ENCODE measurements at regions of chr2 and their contacts with region 1.

Region 1: DNA sequence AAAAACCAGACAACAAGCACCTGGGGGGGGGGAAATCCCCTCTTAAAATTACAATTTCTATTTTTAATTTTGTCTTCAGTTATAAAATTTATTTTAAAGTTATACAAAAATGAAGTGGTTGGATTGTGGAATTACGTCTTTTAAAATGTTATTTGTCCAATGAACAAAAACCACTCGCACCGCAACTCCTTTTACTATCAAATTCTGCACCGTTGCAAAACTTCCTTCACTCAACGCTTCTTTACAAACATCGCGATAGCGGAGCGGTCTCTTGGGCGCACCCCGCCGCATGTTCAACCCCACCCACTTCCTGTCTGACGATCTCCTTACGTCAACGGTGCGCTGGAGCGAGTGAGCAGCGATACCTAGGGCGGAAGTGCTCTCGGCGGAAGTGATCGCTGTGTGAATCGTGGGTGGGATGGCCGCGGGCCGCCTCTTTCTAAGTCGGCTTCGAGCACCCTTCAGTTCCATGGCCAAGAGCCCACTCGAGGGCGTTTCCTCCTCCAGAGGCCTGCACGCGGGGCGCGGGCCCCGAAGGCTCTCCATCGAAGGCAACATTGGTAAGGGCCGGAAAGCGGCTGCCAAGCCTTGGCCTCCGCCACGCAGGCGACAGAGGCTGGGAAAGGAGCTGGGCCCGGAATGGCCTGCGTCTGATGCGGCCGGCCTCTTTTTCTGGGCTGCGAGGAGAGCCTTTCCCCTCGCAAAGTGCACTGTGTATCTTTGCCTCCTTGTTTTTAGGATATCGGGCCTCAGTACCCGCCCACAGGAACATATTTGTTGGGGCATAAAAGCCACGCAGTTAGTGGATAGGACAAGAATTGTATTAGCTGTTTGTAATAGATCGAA is at the start of gene DGUOK:
- DNase-seq: peak; percentile 99
- ATAC-seq: peak; percentile 99
- H3K4me3 Mint-ChIP-seq: peak within 1 kb of the TSS; percentile 87
- H3K27ac Mint-ChIP-seq: peak within 1 kb of the TSS; percentile 96
- H3K4me1 Mint-ChIP-seq: peaks cover 49% of the 10 kb centered on the region
- H3K27me3 Mint-ChIP-seq: no peaks in the 10 kb centered on the region
- total RNA-seq, gene DGUOK: 97.6 to 119 TPM

Region 2: GRCh38 chr2:73536133-73536840 is 390.4 kb before region 1 on chr2:
- CTCF ChIA-PET with region 1: no interaction called
- POLR2A ChIA-PET with region 1: no interaction called
- intact Hi-C with region 1: no loop called
- DNase-seq: no peak
- ATAC-seq: no peak
- H3K4me3 Mint-ChIP-seq: no peak overlapping the region
- H3K27ac Mint-ChIP-seq: no peak overlapping the region
- H3K4me1 Mint-ChIP-seq: no peaks in the 10 kb centered on the region
- H3K27me3 Mint-ChIP-seq: no peaks in the 10 kb centered on the region

Region 3: GRCh38 chr2:73886357-73886756 is 40.4 kb before region 1 on chr2:
- CTCF ChIA-PET with region 1: no interaction called
- POLR2A ChIA-PET with region 1: no interaction called
- intact Hi-C with region 1: loop called in 1 of 2 experiments (anchors 5 kb)
- DNase-seq: peak; percentile 79
- ATAC-seq: peak; percentile 90
- H3K4me3 Mint-ChIP-seq: no peak overlapping the region
- H3K27ac Mint-ChIP-seq: peak overlapping the region; percentile 78
- H3K4me1 Mint-ChIP-seq: peaks cover 25% of the 10 kb centered on the region
- H3K27me3 Mint-ChIP-seq: peaks cover 6% of the 10 kb centered on the region

Region 4: GRCh38 chr2:73985308-73986084 is 58.8 kb after region 1 on chr2:
- CTCF ChIA-PET with region 1: interaction called, 4 read pairs
- POLR2A ChIA-PET with region 1: no interaction called
- intact Hi-C with region 1: loop called (anchors 1 kb)
- DNase-seq: peak; percentile 83
- ATAC-seq: peak; percentile 47
- H3K4me3 Mint-ChIP-seq: peak overlapping the region; percentile 87
- H3K27ac Mint-ChIP-seq: peak overlapping the region; percentile 73
- H3K4me1 Mint-ChIP-seq: peaks cover 71% of the 10 kb centered on the region
- H3K27me3 Mint-ChIP-seq: no peaks in the 10 kb centered on the region

Region 5: DNA sequence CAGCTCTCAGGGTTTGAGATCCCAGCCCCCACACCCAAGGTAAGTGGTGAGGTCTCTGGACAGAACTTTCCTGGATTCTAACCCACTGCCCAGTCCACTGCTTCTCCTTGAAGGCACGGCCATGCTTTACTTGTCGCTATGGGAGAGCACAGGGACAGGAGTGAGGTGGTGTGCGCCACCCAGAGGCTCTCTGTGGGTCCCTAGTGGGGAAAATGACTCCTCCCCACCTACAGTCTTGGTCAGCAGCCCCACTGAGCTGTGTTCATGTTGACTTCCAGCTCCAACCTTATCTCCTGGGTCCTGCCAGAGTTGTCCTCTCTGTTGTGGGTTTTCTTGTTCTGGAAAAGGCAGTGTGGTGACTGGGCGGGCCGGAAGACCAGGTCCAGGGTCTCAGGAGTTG is 69.1 kb after region 1 on chr2:
- CTCF ChIA-PET with region 1: no interaction called
- POLR2A ChIA-PET with region 1: no interaction called
- intact Hi-C with region 1: no loop called
- DNase-seq: no peak
- ATAC-seq: no peak
- H3K4me3 Mint-ChIP-seq: no peak overlapping the region
- H3K27ac Mint-ChIP-seq: no peak overlapping the region
- H3K4me1 Mint-ChIP-seq: peaks cover 80% of the 10 kb centered on the region
- H3K27me3 Mint-ChIP-seq: no peaks in the 10 kb centered on the region

Region 6: DNA sequence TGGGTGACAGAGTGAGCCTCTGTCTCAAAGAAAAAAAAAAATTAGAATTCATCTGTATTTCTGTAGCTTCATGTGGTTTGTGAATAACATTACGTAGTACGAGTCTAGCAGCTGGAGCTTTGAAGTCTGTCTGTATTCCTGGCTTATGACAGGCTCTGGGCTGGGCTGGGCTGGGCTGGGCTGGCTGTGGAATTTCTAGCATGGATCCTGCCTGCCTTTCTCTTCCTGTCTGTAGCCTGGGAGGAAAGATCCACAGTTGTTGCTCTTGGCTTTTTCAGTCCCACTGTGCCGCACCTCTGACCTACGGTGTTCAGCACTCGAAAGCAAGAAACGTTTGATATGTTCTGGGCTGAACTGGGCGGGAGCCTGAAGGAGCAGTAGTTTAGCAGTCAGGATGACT is 165.6 kb after region 1 on chr2:
- CTCF ChIA-PET with region 1: no interaction called
- POLR2A ChIA-PET with region 1: no interaction called
- intact Hi-C with region 1: no loop called
- DNase-seq: no peak
- ATAC-seq: no peak
- H3K4me3 Mint-ChIP-seq: no peak overlapping the region
- H3K27ac Mint-ChIP-seq: no peak overlapping the region
- H3K4me1 Mint-ChIP-seq: no peaks in the 10 kb centered on the region
- H3K27me3 Mint-ChIP-seq: no peaks in the 10 kb centered on the region

Region 7: DNA sequence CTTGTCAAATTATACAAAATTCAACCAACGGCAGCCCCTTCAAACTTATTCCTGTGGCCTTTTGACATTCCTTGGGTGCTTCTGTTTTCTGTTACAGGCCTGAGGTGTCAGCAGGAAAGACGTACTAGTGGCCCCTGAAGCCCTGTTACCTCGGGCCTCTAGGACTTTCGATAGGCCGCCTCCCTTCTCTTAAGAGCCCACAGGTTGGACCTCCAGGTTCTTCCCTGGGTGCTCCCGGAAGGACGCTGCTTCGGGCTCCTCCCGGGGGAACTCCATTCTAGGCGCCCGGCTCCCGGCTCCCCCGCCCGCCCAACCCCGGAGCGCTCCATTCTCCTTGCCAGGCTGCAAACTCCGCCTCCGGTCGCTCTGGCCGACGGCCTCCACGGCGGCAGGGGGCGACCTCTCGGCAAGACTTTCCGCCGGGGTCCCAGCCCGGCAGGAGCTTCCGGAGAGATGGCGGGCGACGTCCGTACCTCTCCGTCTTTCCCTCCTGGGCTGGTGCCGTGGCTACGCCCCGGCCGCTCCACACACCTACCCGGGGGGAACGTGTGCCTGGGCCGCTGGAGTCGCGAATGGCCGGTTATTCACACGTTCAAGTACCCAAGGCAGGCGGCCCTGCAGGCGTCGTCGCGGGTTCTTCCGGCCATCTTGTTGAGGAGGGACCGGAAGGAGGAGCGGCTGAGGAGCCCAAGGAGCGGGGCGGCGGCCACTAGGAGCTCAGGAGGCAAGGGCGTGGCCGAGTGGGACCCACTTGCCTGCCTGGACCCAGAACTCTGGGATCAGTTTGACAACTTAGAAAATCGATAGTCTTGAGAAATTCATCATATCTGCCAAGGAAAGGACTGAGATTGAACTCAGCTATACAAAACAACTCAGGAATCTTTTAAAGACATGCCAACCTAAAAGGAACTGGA is 193.5 kb after region 1 on chr2:
- CTCF ChIA-PET with region 1: no interaction called
- POLR2A ChIA-PET with region 1: no interaction called
- intact Hi-C with region 1: loop called (anchors 1 to 5 kb)
- DNase-seq: peak; percentile 92
- ATAC-seq: peak; percentile 97
- H3K4me3 Mint-ChIP-seq: peak overlapping the region; percentile 81
- H3K27ac Mint-ChIP-seq: peak overlapping the region; percentile 89
- H3K4me1 Mint-ChIP-seq: peaks cover 7% of the 10 kb centered on the region
- H3K27me3 Mint-ChIP-seq: peaks cover 3% of the 10 kb centered on the region

Region 8: DNA sequence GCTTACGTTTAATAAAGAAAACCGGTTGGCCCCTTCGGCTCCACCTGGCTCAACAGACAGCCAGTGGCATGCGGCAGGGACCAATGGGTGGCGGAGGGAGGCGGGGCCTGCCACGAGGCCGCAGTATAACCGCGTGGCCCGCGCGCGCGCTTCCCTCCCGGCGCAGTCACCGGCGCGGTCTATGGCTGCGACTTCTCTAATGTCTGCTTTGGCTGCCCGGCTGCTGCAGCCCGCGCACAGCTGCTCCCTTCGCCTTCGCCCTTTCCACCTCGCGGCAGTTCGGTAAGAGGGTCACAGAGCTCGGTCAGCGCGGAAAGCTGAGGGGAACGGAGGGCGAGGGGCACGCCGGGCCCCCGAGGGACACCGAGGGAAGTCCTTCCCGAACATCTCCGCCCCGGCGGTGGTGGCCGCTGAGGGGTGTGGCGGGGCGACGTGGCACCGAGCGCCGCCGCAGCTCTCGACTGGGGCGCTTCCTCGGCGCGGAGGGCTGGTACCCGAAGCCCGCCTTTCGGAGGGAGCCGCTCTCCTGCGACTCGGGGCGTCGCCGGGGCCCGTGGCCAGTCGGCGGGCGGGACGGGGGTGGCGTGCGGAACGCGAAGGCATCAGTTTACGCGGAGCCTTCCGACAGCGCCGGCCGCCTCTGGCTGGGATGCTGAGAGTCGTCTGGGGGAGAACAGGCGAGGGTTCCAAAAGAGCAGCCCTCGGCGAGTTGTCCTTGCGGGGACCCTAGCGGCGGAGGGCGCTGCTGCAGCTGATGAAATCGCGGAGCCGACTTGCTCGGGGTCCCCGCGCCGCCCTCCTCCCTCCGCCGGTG is 272.0 kb after region 1 on chr2 and contains the start of gene MTHFD2:
- CTCF ChIA-PET with region 1: no interaction called
- POLR2A ChIA-PET with region 1: no interaction called
- intact Hi-C with region 1: loop called (anchors 1 to 5 kb)
- DNase-seq: peak; percentile 96
- ATAC-seq: peak; percentile 90
- H3K4me3 Mint-ChIP-seq: peak within 1 kb of the TSS; percentile 100
- H3K27ac Mint-ChIP-seq: peak within 1 kb of the TSS; percentile 100
- H3K4me1 Mint-ChIP-seq: peaks cover 40% of the 10 kb centered on the region
- H3K27me3 Mint-ChIP-seq: no peaks in the 10 kb centered on the region
- total RNA-seq, gene MTHFD2: 411 to 453 TPM

Measured in activated CD4-positive, alpha-beta T cell treated with anti-CD3 and anti-CD28 coated beads for 36 hours (primary cell).